ENCODE measurements at regions of chr6 and their contacts with region 1.

Region 1: DNA sequence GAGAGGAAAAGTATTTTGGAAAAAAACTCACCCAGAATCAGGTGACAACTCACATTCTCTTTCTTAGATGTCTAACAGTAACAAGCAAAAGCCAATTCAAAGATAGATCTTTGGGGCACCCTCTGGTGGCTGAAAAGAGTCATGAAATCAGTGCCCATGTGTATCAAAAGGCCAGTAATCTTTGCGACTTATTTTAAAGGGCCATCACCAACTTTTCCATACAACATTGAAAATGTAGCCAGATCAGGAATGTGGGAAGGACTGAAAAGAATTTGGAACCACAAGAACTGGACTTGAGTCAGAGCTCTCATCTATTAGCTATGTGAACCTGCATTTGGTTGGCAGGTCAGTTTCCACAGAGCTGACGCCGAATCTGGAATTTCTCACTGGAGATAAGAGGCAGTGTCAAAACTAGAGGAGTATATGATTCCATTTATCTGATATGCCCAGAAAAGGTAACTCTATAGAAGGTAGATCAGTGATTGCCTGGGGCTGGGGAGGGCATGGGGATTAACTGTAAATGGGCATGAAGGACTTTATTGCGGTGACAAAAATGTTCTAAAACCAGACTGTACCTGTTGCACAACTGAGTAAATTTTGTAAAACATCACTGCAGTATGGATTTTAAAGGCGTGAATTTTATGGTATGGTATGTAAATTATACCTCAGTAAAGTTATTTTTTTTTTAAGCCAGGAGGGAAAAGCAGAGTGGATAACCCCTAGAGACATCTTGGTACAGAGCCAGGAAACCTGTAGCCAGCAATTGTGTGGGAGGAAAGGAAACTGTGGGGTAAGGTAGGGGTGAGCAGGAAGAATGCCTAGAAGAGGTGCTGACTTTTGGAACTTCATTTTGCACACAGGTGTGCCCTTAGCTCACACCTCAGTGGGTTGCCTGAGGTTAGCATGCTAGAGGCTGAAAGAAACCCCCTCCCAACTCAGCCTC is 117.1 kb upstream of the ASF1A start:
- DNase-seq: peak in 1 of 2 experiments; percentile 53
- H3K4me3 ChIP-seq: no peak overlapping the region
- H3K27ac ChIP-seq: no peak overlapping the region
- H3K4me1 ChIP-seq: no peaks in the 10 kb centered on the region
- H3K27me3 ChIP-seq: no peaks in the 10 kb centered on the region
- CTCF ChIP-seq: peak in 2 of 3 experiments; percentile 50 to 70; a peak in 3 of 4 replicates
- EP300 ChIP-seq: no peak
- POLR2A ChIP-seq: no peak
- RAD21 ChIP-seq: peak; percentile 60 to 71

Region 2: DNA sequence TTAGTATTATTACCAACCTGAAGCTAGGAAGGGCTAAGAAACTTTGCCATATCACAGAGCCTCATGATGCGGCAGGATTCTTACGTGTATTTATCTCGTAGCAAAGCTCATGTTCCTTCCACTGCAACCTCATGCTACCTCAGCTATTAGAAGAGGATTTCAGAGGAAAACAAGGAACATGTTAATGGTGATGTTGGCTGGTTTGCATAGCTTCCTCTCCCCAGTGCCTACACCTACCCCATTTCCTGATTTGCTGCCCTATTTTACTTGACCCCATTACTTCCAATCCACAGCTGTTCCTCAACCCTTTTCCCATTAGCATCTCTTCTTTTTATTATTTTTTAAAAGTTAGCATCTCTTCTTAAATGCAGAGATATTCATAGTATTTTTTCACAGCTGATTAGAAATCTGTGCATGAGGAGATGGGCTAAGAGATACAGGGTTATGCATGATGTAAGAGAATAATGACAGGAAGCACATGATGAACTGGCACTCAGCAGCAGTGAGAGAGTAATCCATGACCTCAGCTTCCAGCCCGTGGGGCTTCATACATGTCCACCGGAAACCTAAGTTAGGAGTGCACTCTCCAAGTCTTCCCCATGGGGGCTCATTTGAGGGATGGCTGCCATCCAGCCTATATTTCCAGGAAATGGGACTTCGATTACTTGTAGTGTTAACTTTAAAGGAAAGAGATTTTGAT is 11.0 kb after region 1 on chr6:
- CTCF ChIA-PET with region 1: interaction called, 23 read pairs
- POLR2A ChIA-PET with region 1: no interaction called
- DNase-seq: no peak
- H3K4me3 ChIP-seq: no peak overlapping the region
- H3K27ac ChIP-seq: no peak overlapping the region
- H3K4me1 ChIP-seq: peaks cover 0 to 5% (median 0%) of the 10 kb centered on the region in 4 experiments; a peak in 3 of 7 replicates
- H3K27me3 ChIP-seq: no peaks in the 10 kb centered on the region
- CTCF ChIP-seq: no peak
- EP300 ChIP-seq: no peak
- POLR2A ChIP-seq: no peak
- RAD21 ChIP-seq: no peak

Region 3: GRCh38 chr6:118800394-118801071 is 23.7 kb after region 1 on chr6:
- CTCF ChIA-PET with region 1: interaction called, 13 read pairs
- POLR2A ChIA-PET with region 1: no interaction called
- DNase-seq: peak; percentile 36 to 81
- H3K4me3 ChIP-seq: peak overlapping the region in 1 of 4 experiments; percentile 19; a peak in 1 of 8 replicates
- H3K27ac ChIP-seq: no peak overlapping the region
- H3K4me1 ChIP-seq: no peaks in the 10 kb centered on the region
- H3K27me3 ChIP-seq: no peaks in the 10 kb centered on the region
- CTCF ChIP-seq: peak in 2 of 3 experiments; percentile 74 to 93; a peak in 3 of 4 replicates
- EP300 ChIP-seq: no peak
- POLR2A ChIP-seq: no peak
- RAD21 ChIP-seq: peak; percentile 73 to 80

Region 4: DNA sequence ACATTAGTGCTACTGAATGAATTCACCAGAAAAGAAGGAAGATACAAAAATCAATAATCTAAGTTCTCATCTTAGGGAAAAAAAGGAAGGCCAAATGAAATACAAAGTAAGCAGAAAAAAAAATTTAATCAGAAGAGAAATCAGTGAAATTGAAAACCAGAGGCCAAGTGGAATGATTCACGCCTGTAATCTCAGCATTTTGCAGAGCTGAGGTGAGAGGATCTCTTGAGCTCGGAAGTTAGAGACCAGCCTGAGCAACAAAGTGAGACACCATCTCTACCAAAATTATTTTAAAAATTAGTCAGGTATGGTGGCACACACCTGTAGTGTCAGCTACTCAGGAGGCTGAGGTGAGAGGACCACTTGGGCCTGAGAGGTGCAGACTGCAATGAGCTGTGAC is 95.8 kb after region 1 on chr6:
- CTCF ChIA-PET with region 1: no interaction called
- POLR2A ChIA-PET with region 1: no interaction called
- DNase-seq: no peak
- H3K4me3 ChIP-seq: no peak overlapping the region
- H3K27ac ChIP-seq: no peak overlapping the region
- H3K4me1 ChIP-seq: no peaks in the 10 kb centered on the region
- H3K27me3 ChIP-seq: no peaks in the 10 kb centered on the region
- CTCF ChIP-seq: no peak
- EP300 ChIP-seq: no peak
- POLR2A ChIP-seq: no peak
- RAD21 ChIP-seq: no peak

Measured in H1 (cell line).